ENCODE measurements at regions of chr5 and their contacts with region 1.

Region 1: DNA sequence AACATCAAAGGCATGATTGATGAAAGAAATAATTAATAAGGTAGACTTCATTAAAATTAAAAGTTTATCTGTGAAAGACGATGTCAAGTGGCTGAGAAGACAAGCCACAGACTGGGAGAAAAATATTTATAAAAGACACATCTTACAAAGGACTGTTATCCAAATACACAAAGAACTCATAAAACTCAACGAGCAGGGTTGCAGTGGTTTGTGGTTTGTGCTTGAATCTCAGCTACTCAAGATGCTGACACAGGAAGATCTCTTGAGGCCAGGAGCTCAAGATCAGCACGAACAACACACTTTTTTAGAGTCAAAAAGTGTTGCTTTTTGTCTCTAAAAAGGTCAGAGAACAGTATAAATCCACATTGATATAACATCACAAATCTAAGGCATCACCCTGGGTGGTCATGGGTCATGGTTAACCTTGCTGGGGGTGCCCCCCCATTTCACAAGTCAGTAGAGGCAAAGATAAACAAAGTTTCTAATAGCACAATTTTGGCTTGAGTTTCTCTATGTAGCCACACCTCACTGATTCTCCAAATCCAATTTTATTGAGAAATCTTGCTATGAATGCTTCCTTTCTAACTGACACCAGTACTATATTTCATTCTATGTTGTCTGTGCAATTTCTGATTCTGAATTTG is 342.9 kb upstream of the RPS23 start:
- DNase-seq: peak; percentile 10
- ATAC-seq: peak; percentile 54
- H3K4me3 ChIP-seq: no peak overlapping the region
- H3K27ac ChIP-seq: no peak overlapping the region
- H3K4me1 ChIP-seq: no peaks in the 10 kb centered on the region
- H3K27me3 ChIP-seq: no peaks in the 10 kb centered on the region
- CTCF ChIP-seq: no peak

Region 2: GRCh38 chr5:82312373-82312856 is 308.7 kb before region 1 on chr5:
- CTCF ChIA-PET with region 1: no interaction called
- POLR2A ChIA-PET with region 1: interaction called, 15 read pairs
- intact Hi-C with region 1: no loop called
- DNase-seq: peak; percentile 83
- ATAC-seq: peak; percentile 90
- H3K4me3 ChIP-seq: no peak overlapping the region
- H3K27ac ChIP-seq: no peak overlapping the region
- H3K4me1 ChIP-seq: no peaks in the 10 kb centered on the region
- H3K27me3 ChIP-seq: no peaks in the 10 kb centered on the region
- CTCF ChIP-seq: peak; percentile 96

Region 3: DNA sequence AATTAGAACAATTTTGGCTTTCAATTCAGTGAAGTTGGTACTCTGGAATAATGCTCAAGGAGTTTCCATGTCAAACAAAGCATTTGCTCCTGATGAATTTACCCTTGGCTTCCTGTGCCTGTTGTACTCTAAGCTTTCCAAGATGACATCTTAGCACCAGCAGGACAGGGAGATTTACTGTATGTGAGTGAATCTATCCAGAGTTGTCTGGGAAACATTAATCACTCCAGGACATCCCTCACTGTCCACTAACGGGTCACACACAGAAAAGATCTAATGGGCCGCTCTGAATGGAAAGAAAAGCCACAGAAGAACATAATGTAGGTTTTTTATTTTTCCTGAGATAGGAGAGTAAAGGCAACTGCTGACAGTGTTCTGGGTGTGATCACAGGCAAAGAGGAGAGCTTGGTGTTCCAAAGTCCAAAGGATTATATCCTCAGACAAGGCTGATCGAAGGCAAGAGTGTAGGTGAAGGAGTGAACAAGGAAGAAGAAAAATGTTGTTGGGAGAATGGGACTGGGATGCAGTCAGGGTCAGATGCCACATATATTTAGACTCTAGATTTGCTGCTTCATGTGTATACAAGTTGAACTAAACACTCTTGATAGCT is 175.2 kb before region 1 on chr5:
- CTCF ChIA-PET with region 1: no interaction called
- POLR2A ChIA-PET with region 1: no interaction called
- intact Hi-C with region 1: no loop called
- DNase-seq: no peak
- ATAC-seq: no peak
- H3K4me3 ChIP-seq: no peak overlapping the region
- H3K27ac ChIP-seq: no peak overlapping the region
- H3K4me1 ChIP-seq: no peaks in the 10 kb centered on the region
- H3K27me3 ChIP-seq: no peaks in the 10 kb centered on the region
- CTCF ChIP-seq: no peak

Measured in PC-3 (cell line).